ENCODE measurements at regions of chr19 and their contacts with region 1.

Region 1: GRCh38 chr19:41597600-41598041 is 21.7 kb downstream of the CEACAM21 start:
- DNase-seq: peak; percentile 25
- ATAC-seq: peak; percentile 90
- H3K4me3 Mint-ChIP-seq: no peak overlapping the region
- H3K27ac Mint-ChIP-seq: peak overlapping the region; percentile 75
- H3K4me1 Mint-ChIP-seq: peaks cover 11% of the 10 kb centered on the region
- H3K27me3 Mint-ChIP-seq: peaks cover 3% of the 10 kb centered on the region
- CTCF ChIP-seq: peak; percentile 88

Region 2: DNA sequence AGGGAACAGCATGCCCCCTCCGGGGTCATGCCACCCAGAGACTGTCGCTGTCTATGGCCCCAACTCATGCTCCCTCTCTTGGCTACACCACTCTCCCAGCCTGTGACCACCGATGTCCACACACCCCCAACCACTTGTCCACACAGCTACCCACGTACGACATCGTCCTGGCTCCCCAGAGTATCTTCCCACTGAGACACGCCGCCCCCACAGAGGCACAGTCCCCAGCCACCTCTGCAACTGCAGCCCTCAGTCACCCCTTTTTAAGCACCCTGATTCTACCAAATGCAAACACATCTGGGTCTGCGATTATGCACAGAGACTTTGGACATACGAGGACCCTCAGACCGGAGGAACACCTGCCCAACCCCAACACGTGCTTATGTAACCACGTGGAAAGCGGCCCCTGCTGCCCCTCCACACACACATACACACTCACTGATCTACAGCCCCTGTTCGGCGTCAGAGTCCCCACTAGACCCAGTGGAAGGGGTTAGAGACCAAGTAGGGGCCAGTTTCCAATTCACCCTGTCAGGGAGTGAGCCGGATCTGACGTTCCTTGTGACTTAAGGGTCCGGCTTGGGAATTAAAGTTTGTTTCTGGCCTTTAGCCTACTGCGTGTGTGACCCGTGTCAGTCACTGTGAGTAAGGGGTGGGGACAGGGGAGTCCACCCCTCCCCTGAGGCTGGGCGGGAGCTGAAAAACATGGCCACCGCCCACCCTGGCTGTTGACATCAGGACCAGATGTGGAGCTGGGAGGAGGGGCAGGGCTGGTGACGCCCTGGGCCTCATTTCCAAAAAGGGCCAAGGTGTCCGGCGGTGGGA is 390.5 kb before region 1 on chr19:
- CTCF ChIA-PET with region 1: interaction called, 11 read pairs
- POLR2A ChIA-PET with region 1: no interaction called
- intact Hi-C with region 1: loop called (anchors 1 kb)
- DNase-seq: no peak
- ATAC-seq: no peak
- H3K4me3 Mint-ChIP-seq: no peak overlapping the region
- H3K27ac Mint-ChIP-seq: no peak overlapping the region
- H3K4me1 Mint-ChIP-seq: no peaks in the 10 kb centered on the region
- H3K27me3 Mint-ChIP-seq: peaks cover 3% of the 10 kb centered on the region
- CTCF ChIP-seq: no peak

Region 3: GRCh38 chr19:41541990-41542584 is 55.5 kb before region 1 on chr19:
- CTCF ChIA-PET with region 1: interaction called, 4 read pairs
- POLR2A ChIA-PET with region 1: no interaction called
- intact Hi-C with region 1: loop called (anchors 2 kb)
- DNase-seq: peak; percentile 56
- ATAC-seq: no peak
- H3K4me3 Mint-ChIP-seq: peak overlapping the region; percentile 70
- H3K27ac Mint-ChIP-seq: peak overlapping the region; percentile 57
- H3K4me1 Mint-ChIP-seq: peaks cover 59% of the 10 kb centered on the region
- H3K27me3 Mint-ChIP-seq: no peaks in the 10 kb centered on the region
- CTCF ChIP-seq: no peak

Region 4: DNA sequence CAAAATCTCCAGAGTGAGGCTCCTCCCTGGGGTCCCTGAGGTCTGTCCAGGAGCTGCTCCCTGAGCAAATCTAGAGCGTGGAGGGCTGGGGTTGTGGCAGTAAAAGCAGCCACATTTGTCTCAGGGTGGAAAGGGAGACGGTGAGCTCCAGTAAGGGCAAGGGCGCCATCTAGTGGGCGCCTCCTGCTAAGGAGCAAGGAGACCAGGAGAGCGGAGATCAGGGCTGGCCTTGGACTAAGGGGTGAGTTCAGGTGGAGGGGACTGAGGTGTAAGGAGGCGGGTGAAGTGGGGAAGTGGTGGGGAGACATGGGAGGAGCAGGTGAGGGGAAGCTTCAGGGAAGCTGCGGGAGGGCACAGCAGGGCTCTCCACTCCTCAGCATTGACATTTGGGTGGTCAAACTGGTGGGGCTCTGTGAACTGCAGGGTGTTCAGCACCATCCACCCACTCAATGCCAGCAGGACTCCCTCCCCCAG is 26.9 kb before region 1 on chr19:
- CTCF ChIA-PET with region 1: interaction called, 6 read pairs
- POLR2A ChIA-PET with region 1: no interaction called
- intact Hi-C with region 1: loop called (anchors 1 kb)
- DNase-seq: peak; percentile 77
- ATAC-seq: peak; percentile 97
- H3K4me3 Mint-ChIP-seq: no peak overlapping the region
- H3K27ac Mint-ChIP-seq: no peak overlapping the region
- H3K4me1 Mint-ChIP-seq: peaks cover 14% of the 10 kb centered on the region
- H3K27me3 Mint-ChIP-seq: peaks cover 2% of the 10 kb centered on the region
- CTCF ChIP-seq: peak; percentile 50

Region 5: GRCh38 chr19:41575998-41576397 is 21.6 kb before region 1 on chr19 and contains the start of gene CEACAM21:
- CTCF ChIA-PET with region 1: interaction called, 6 read pairs
- POLR2A ChIA-PET with region 1: no interaction called
- intact Hi-C with region 1: loop called (anchors 1 kb)
- DNase-seq: peak; percentile 52
- ATAC-seq: peak; percentile 100
- H3K4me3 Mint-ChIP-seq: peak within 1 kb of the TSS; percentile 81
- H3K27ac Mint-ChIP-seq: peak within 1 kb of the TSS; percentile 91
- H3K4me1 Mint-ChIP-seq: peaks cover 24% of the 10 kb centered on the region
- H3K27me3 Mint-ChIP-seq: no peaks in the 10 kb centered on the region
- CTCF ChIP-seq: no peak
- total RNA-seq, gene CEACAM21: 11.7 and 12.0 TPM in 2 replicates

Region 6: GRCh38 chr19:42176990-42177685 is 579.5 kb after region 1 on chr19:
- CTCF ChIA-PET with region 1: no interaction called
- POLR2A ChIA-PET with region 1: no interaction called
- intact Hi-C with region 1: no loop called
- DNase-seq: peak; percentile 71
- ATAC-seq: peak; percentile 91
- H3K4me3 Mint-ChIP-seq: no peak overlapping the region
- H3K27ac Mint-ChIP-seq: no peak overlapping the region
- H3K4me1 Mint-ChIP-seq: peaks cover 15% of the 10 kb centered on the region
- H3K27me3 Mint-ChIP-seq: peaks cover 20% of the 10 kb centered on the region
- CTCF ChIP-seq: no peak